ENCODE measurements at regions of chr18 and their contacts with region 1.

Region 1: GRCh38 chr18:25561918-25562317 is 210.0 kb upstream of the ZNF521 start:
- DNase-seq: no peak
- ATAC-seq: no peak
- H3K4me3 ChIP-seq: no peak overlapping the region
- H3K27ac ChIP-seq: no peak overlapping the region
- H3K4me1 ChIP-seq: peaks cover 0 to 1% (median 0%) of the 10 kb centered on the region in 12 donors
- H3K27me3 ChIP-seq: no peaks in the 10 kb centered on the region
- CTCF ChIP-seq: peak in 7 of 12 donors; percentile 12 to 37 (median 26)
- POLR2A ChIP-seq: no peak

Region 2: GRCh38 chr18:25409971-25410370 is 151.9 kb before region 1 on chr18:
- intact Hi-C with region 1: loop called in 1 of 10 experiments (anchors 10 kb)
- DNase-seq: no peak
- ATAC-seq: no peak
- H3K4me3 ChIP-seq: no peak overlapping the region
- H3K27ac ChIP-seq: no peak overlapping the region
- H3K4me1 ChIP-seq: no peaks in the 10 kb centered on the region
- H3K27me3 ChIP-seq: no peaks in the 10 kb centered on the region
- CTCF ChIP-seq: no peak
- POLR2A ChIP-seq: no peak

Region 3: DNA sequence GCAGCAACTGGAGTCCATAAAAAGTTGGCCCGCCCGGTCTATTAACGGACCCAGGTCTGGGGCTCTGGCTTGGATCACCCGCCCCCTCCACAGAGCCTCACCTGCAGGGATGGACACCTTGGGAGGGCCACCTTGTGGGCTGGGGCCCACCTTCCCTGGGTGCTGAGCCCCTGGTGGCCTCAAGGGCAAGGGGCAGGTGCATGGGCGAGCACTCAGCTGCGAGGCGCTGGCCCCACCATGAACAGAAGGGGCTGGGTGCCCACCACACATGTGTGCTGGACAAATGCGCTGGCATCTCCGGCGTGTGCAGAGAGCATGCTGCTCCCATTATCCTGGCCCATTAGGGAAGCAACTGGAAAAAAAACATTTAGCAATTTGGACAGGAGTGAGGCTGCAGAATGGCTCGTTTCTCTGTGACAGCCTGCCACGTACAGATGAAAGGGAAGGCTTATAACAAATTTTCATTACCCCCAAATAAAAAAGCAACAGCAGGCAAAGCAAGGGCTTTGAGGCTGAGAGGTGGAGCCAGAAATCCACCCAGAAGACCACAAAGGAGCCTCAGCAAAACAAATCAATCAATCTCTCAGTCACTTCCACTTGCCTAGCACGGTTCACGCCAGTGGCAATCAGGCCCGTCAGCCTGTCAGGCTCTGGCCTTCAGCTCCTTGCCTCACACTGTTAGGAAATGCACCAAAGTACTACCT is 43.1 kb after region 1 on chr18:
- intact Hi-C with region 1: loop called in 2 of 10 experiments (anchors 5 to 10 kb)
- DNase-seq: no peak
- ATAC-seq: no peak
- H3K4me3 ChIP-seq: no peak overlapping the region
- H3K27ac ChIP-seq: no peak overlapping the region
- H3K4me1 ChIP-seq: no peaks in the 10 kb centered on the region
- H3K27me3 ChIP-seq: peaks cover 0 to 4% (median 0%) of the 10 kb centered on the region in 9 donors
- CTCF ChIP-seq: no peak
- POLR2A ChIP-seq: no peak

Region 4: GRCh38 chr18:25669741-25670140 is 107.8 kb after region 1 on chr18:
- intact Hi-C with region 1: loop called in 1 of 10 experiments (anchors 10 kb)
- DNase-seq: no peak
- ATAC-seq: no peak
- H3K4me3 ChIP-seq: no peak overlapping the region
- H3K27ac ChIP-seq: no peak overlapping the region
- H3K4me1 ChIP-seq: peaks cover 0 to 3% (median 0%) of the 10 kb centered on the region in 12 donors
- H3K27me3 ChIP-seq: no peaks in the 10 kb centered on the region
- CTCF ChIP-seq: peak in 7 of 12 donors; percentile 8 to 30 (median 19)
- POLR2A ChIP-seq: no peak

Region 5: DNA sequence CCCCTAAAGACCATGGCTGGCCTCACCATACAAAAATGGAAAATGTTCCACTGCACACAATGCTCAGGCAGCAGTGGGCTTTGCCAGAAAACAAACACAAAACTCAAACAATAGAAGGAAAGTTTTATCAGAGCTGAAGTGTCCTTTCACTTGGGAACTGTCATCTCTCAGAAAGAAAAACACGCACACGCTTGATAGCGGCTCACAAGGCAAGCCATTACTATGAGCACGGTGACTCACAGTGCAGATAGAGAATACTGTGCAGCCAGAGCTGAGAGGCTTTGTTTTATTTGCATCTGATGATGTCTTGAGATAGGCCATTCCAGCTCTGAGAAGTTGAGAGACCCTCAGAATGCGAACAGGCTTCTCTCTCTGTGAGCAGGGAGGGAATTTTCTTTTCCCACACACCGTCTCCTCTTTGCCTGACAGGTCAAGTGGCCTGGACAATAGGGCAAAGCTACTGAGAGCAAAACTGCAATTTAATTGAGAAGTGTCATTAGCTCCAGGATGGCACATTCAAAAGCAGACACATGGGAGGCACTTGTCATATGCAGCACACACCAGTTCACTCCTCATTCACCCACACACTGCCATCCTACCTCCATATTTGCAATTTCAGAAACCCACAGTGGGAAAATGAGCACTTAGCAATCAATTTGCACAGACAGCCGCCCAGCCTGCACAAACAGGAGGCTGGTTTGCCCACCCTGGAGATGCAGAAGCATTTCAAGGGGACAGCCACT is 291.9 kb after region 1 on chr18:
- intact Hi-C with region 1: no loop called
- DNase-seq: no peak
- ATAC-seq: peak in 1 of 4 donors; percentile 60
- H3K4me3 ChIP-seq: no peak overlapping the region
- H3K27ac ChIP-seq: no peak overlapping the region
- H3K4me1 ChIP-seq: no peaks in the 10 kb centered on the region
- H3K27me3 ChIP-seq: no peaks in the 10 kb centered on the region
- CTCF ChIP-seq: no peak
- POLR2A ChIP-seq: no peak

Measured in heart left ventricle (tissue), 16 donors.